ENCODE measurements at regions of chr12 and their contacts with region 1.

Region 1: DNA sequence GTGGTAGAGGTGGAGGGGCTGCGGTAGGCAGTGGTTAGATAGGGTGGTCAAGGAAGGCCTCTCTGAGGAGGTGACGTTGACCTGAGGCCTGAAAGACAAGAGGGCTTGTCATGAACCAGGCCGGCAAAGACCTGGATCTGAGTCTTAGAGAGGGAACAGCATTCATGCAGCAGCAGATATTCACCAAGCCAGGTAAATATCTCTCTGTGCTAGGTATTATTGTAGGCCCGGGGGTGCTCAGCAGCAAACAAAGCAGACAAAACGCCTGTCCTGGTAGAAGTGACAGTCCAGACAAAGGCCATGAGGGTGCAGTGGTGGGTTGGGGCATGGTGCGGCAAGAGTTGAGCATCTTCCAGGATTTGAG is 117.6 kb downstream of the PTPN11 start:
- DNase-seq: no peak
- H3K4me3 ChIP-seq: no peak overlapping the region
- H3K27ac ChIP-seq: no peak overlapping the region
- H3K4me1 ChIP-seq: no peaks in the 10 kb centered on the region
- H3K27me3 ChIP-seq: no peaks in the 10 kb centered on the region
- CTCF ChIP-seq: no peak
- EP300 ChIP-seq: no peak
- POLR2A ChIP-seq: no peak

Region 2: GRCh38 chr12:112564162-112564784 is 27.9 kb after region 1 on chr12:
- in situ Hi-C with region 1: no loop called
- intact Hi-C with region 1: loop called (anchors 1 kb)
- DNase-seq: no peak
- H3K4me3 ChIP-seq: no peak overlapping the region
- H3K27ac ChIP-seq: no peak overlapping the region
- H3K4me1 ChIP-seq: no peaks in the 10 kb centered on the region
- H3K27me3 ChIP-seq: no peaks in the 10 kb centered on the region
- CTCF ChIP-seq: no peak
- EP300 ChIP-seq: no peak
- POLR2A ChIP-seq: no peak